Dorsolateral prefrontal cortex (tissue), 120 donors: ENCODE measurements at regions of chr4 and their contacts with region 1.

Region 1: DNA sequence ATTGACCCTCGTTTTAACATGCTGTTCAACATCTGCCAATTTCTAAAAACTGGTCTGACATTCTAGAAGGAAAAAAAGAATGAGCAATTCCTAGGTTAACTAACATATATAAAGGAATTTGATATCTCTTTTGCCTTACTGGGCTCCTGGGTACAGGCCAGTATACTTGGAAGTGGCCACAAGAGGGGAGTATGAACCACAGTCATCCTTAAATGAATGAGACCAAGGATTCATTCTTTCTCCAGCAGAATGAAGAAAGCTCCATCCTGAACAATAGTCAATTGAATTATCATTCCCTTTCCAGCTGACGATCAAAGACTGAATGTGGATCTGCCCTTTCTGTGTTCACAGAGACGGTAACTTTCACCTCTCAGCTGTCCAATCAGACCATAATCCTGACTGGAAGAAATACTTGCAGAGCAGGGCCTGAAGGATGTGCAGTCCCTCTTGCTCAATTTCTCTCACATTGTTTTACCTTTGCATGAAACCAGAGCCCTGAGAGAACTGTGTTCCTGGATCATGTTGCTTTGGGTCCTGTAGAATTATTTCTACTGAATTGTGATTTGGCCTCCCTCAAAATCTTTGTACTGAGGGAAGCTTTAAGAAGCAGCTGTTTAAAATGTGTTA is 14.8 kb upstream of the SPARCL1 start:
- DNase-seq: peak in 2 of 10 donors; percentile 37 to 58
- H3K4me3 ChIP-seq: no peak overlapping the region
- H3K27ac ChIP-seq: peak overlapping the region in 53 of 59 donors; percentile 19 to 94 (median 80)
- H3K27me3 ChIP-seq: no peaks in the 10 kb centered on the region
- CTCF ChIP-seq: peak; percentile 34 to 85 (median 72)

Region 2: DNA sequence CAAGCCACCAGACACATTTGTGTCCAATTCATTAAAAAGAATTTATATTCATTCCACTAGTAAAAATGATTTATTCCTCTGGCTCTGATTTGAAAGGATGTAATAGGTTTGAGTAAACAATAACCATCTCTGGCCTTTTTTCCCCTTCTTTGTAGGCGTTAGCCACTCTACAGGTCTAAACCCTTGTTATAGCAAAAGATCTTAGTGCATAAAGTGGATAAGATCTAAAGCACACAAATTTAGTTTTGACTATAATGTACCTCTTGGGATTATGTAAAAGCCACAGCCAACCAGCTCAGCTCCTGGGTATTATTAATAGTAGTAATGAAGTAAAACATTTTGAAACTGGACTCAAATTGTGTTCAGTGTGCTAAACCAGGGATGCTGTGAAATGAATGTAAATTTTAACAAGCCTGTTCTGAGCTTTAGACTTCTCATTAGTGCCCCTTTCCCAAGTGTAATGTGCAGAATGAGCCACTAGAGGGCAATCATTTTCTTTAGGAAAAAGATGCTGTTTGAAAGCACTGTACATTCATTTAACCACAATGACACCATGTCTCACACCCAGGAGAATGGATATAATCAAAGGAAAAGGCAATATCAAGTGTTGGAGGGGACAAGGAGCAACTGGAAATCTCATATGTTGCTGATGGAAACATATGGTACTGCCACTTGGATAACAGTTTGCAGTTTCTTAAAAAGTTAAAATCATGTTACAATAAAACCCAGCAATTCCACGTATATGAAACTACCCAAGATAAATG is 393.3 kb before region 1 on chr4:
- intact Hi-C with region 1: no loop called
- DNase-seq: peak in 2 of 10 donors; percentile 35 to 48
- H3K4me3 ChIP-seq: no peak overlapping the region
- H3K27ac ChIP-seq: no peak overlapping the region
- H3K27me3 ChIP-seq: no peaks in the 10 kb centered on the region
- CTCF ChIP-seq: peak; percentile 86 to 99 (median 94)

Region 3: DNA sequence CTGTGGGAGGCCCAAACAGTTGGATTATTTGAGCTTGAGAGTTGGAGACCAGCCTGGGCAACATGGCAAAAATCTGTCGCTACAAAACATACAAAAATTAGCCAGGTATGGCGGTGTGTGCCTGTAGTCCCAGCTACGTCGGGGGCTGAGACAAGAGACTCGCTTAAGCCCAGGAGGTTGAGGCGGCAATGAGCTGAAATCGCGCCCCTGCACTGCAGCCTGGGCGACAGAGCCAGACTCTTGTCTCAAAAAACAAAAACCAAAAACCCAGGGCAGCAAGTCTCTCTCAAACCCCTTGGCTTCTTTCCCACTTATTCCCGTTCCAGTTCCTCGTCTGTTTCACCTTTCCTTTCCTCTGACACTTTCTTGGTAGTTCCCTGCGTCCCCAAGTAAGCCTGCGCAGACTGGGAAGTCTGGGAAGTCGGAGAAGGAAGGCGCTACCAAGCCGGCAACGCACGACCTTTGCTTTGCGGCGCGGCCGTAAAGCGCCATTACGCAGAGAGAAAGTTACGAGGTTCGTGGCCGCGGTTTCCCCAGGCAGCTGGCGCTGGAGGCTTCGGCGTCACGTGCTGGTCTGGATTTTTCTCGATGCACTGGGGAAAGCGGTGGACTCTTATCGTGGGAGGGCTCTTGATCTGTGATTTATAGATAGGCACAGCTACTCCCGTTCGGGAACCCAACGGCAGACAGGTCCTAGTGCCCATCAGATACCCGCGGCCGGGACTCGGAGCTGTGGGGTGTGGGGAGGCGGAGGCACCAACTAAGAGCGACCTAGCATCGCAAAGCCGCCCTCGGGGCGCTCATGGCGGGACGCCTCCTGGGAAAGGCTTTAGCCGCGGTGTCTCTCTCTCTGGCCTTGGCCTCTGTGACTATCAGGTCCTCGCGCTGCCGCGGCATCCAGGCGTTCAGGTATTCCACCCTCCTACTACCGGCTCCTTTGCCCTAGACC is 121.6 kb before region 1 on chr4 and contains the start of gene NUDT9:
- intact Hi-C with region 1: no loop called
- DNase-seq: peak; percentile 90 to 96 (median 94)
- H3K4me3 ChIP-seq: peak within 1 kb of the TSS; percentile 58 to 99 (median 89)
- H3K27ac ChIP-seq: peak within 1 kb of the TSS; percentile 72 to 98 (median 92)
- H3K27me3 ChIP-seq: no peaks in the 10 kb centered on the region
- CTCF ChIP-seq: peak in 37 of 56 donors; percentile 2 to 53 (median 26)
- total RNA-seq, gene NUDT9: 21.4 to 53.9 (median 34.4) TPM

Region 4: DNA sequence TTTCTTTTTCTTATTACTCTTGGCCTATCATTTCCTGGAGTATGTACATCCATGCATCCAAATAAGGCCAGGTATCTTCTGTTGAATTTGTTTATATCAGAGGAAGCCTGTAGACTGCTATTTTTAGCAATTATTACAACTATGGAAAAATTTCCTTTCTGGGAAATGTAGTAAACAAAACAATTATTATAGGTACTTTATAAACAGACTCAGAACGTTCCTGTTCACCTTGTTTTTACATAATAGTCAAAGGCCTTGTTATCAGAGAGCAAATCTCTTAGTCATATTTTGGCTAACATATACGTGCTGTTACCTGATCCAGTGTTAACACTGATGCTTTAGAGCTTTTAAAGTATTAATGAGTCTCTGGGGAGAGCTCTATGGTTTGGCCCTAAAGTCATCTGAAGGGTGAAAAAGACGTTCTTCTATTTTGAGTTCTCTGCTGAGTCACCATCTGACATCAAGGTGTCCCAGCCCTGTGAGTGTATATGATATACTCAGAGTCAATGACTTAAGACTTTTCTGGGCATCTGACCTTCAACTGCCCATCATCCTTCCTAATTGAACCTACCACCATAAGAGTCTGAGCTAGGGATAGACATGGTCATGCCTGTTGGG is 22.1 kb before region 1 on chr4:
- intact Hi-C with region 1: no loop called
- DNase-seq: no peak
- H3K4me3 ChIP-seq: peak overlapping the region in 40 of 59 donors; percentile 0 to 75 (median 26)
- H3K27ac ChIP-seq: peak overlapping the region in 58 of 59 donors; percentile 13 to 98 (median 78)
- H3K27me3 ChIP-seq: no peaks in the 10 kb centered on the region
- CTCF ChIP-seq: no peak

Region 5: DNA sequence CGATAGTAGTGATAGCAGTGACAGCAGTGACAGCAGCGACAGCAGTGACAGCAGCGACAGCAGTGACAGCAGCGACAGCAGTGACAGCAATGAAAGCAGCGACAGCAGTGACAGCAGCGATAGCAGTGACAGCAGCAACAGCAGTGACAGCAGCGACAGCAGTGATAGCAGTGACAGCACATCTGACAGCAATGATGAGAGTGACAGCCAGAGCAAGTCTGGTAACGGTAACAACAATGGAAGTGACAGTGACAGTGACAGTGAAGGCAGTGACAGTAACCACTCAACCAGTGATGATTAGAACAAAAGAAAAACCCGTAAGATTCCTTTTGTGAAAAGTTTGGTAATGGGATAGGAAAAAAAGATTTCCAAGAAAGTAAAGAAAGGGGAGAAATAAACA is 72.3 kb after region 1 on chr4:
- intact Hi-C with region 1: loop called (anchors 5 to 10 kb)
- DNase-seq: no peak
- H3K4me3 ChIP-seq: no peak overlapping the region
- H3K27ac ChIP-seq: no peak overlapping the region
- H3K27me3 ChIP-seq: peaks cover 0 to 7% (median 0%) of the 10 kb centered on the region in 45 donors
- CTCF ChIP-seq: no peak

Region 6: DNA sequence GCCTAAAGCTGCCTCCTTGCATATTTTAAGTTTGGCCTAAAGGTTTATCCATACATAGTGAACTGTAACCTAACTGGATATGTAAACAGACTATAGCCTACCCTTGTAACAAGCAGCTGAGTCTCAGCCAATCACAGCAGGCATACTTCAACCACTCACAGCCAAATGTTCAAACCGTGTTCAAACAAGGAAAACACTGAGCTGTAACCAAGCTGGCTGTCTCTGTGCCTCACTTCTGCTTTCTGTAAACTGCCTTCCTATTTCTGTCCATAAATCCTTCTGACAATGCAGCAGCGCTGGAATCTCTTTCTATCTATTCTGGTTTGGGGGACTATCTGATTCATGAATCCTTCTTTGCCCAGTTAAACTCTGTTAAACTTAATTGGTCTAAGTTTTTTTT is 80.8 kb after region 1 on chr4:
- intact Hi-C with region 1: loop called (anchors 5 to 10 kb)
- DNase-seq: no peak
- H3K4me3 ChIP-seq: no peak overlapping the region
- H3K27ac ChIP-seq: no peak overlapping the region
- H3K27me3 ChIP-seq: no peaks in the 10 kb centered on the region
- CTCF ChIP-seq: no peak

Region 7: GRCh38 chr4:87838890-87839591 is 295.1 kb after region 1 on chr4:
- intact Hi-C with region 1: loop called (anchors 2 to 5 kb)
- DNase-seq: peak in 7 of 10 donors; percentile 23 to 63 (median 48)
- H3K4me3 ChIP-seq: peak overlapping the region in 1 of 59 donors; percentile 5
- H3K27ac ChIP-seq: peak overlapping the region; percentile 33 to 98 (median 93)
- H3K27me3 ChIP-seq: no peaks in the 10 kb centered on the region
- CTCF ChIP-seq: peak; percentile 71 to 93 (median 85)

Region 8: GRCh38 chr4:88378691-88379559 is 835.0 kb after region 1 on chr4 and contains the start of gene HERC6:
- intact Hi-C with region 1: no loop called
- DNase-seq: peak; percentile 12 to 84 (median 72)
- H3K4me3 ChIP-seq: peak within 1 kb of the TSS; percentile 63 to 99 (median 91)
- H3K27ac ChIP-seq: peak within 1 kb of the TSS; percentile 70 to 99 (median 92)
- H3K27me3 ChIP-seq: no peaks in the 10 kb centered on the region
- CTCF ChIP-seq: peak in 54 of 56 donors; percentile 30 to 79 (median 64)
- total RNA-seq, gene HERC6: 8.9 to 84.3 (median 23.3) TPM